K562 (cell line): ENCODE measurements at regions of chr5 and their contacts with region 1.

Region 1: GRCh38 chr5:103232393-103232999 is 26.1 kb upstream of the MACIR start:
- DNase-seq: peak; percentile 32 to 52 (median 39)
- ATAC-seq: peak; percentile 96
- H3K4me3 ChIP-seq: no peak overlapping the region
- H3K27ac ChIP-seq: no peak overlapping the region
- H3K4me1 ChIP-seq: no peaks in the 10 kb centered on the region
- H3K27me3 ChIP-seq: peaks cover 0 to 4% of the 10 kb centered on the region in 2 experiments; a peak in 2 of 5 replicates
- CTCF ChIP-seq: peak; percentile 64 to 81 (median 67)
- EP300 ChIP-seq: no peak
- POLR2A ChIP-seq: no peak
- RAD21 ChIP-seq: peak; percentile 89 to 92

Region 2: DNA sequence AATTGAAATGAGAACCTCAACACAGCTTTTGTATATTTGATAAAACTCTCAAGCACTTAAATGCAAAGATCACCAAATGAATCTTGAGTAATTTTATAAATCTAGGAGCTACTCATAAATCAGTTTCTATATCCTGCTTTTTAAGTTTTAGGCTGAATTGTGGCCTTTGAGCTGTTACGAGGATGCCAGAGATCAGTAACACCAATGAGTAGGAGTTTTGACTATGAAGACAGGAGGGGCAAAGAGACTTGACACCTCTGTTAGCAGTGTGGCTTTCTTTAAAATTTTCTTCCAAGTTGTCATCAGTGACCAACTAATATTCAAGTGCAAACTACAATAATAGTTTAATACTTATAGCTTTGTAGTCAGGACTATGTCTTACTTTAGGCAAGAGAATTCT is 99.8 kb before region 1 on chr5:
- CTCF ChIA-PET with region 1: no interaction called
- POLR2A ChIA-PET with region 1: no interaction called
- in situ Hi-C with region 1: no loop called
- intact Hi-C with region 1: no loop called
- DNase-seq: no peak
- ATAC-seq: peak; percentile 40; the same call in 2 of the 3 replicates
- H3K4me3 ChIP-seq: no peak overlapping the region
- H3K27ac ChIP-seq: no peak overlapping the region
- H3K4me1 ChIP-seq: no peaks in the 10 kb centered on the region
- H3K27me3 ChIP-seq: no peaks in the 10 kb centered on the region
- CTCF ChIP-seq: no peak
- EP300 ChIP-seq: no peak
- POLR2A ChIP-seq: no peak
- RAD21 ChIP-seq: no peak

Region 3: DNA sequence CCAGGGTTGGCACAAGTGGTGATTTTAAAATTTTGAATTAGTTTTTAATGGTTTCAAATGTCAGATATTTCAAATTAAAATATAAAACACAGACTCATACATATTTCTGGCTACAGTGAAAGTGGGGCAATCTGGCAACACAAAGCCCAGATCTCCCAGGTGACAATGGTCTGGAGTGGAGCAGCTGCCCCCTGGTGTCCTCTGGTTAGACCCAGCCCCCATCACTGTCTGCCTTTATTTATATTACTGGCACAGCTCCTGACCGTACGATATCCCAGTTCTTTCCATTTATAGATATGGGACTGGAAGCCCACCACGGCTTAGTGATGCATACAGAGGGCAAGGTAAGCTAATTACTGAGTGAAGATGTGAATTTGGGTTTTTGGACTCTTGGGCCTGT is 63.4 kb after region 1 on chr5:
- CTCF ChIA-PET with region 1: no interaction called
- POLR2A ChIA-PET with region 1: no interaction called
- in situ Hi-C with region 1: no loop called
- intact Hi-C with region 1: loop called (anchors 2 kb)
- DNase-seq: peak in 2 of 4 experiments; percentile 15 to 21
- ATAC-seq: peak; percentile 83
- H3K4me3 ChIP-seq: no peak overlapping the region
- H3K27ac ChIP-seq: no peak overlapping the region
- H3K4me1 ChIP-seq: no peaks in the 10 kb centered on the region
- H3K27me3 ChIP-seq: peaks cover 0 to 2% of the 10 kb centered on the region in 2 experiments; a peak in 1 of 5 replicates
- CTCF ChIP-seq: peak; percentile 36 to 59 (median 39); a peak in 4 of 6 replicates
- EP300 ChIP-seq: no peak
- POLR2A ChIP-seq: no peak
- RAD21 ChIP-seq: peak in 1 of 2 experiments; percentile 50; a peak in 3 of 4 replicates

Region 4: GRCh38 chr5:103333376-103333775 is 100.9 kb after region 1 on chr5:
- CTCF ChIA-PET with region 1: no interaction called
- POLR2A ChIA-PET with region 1: no interaction called
- in situ Hi-C with region 1: no loop called
- intact Hi-C with region 1: loop called (anchors 10 kb)
- DNase-seq: no peak
- ATAC-seq: no peak
- H3K4me3 ChIP-seq: no peak overlapping the region
- H3K27ac ChIP-seq: no peak overlapping the region
- H3K4me1 ChIP-seq: no peaks in the 10 kb centered on the region
- H3K27me3 ChIP-seq: no peaks in the 10 kb centered on the region; a peak in 1 of 5 replicates
- CTCF ChIP-seq: no peak
- EP300 ChIP-seq: no peak
- POLR2A ChIP-seq: no peak
- RAD21 ChIP-seq: no peak